Ovary (tissue), 10 donors: ENCODE measurements at regions of chr2 and their contacts with region 1.

Region 1: GRCh38 chr2:205685314-205686055 is 3.2 kb downstream of the NRP2 start:
- DNase-seq: peak in 4 of 5 donors; percentile 53 to 78 (median 60)
- H3K4me3 ChIP-seq: peak overlapping the region; percentile 74
- H3K27ac ChIP-seq: peak overlapping the region; percentile 56 to 75
- H3K4me1 ChIP-seq: peaks cover 22% of the 10 kb centered on the region
- H3K27me3 ChIP-seq: no peaks in the 10 kb centered on the region
- CTCF ChIP-seq: no peak
- EP300 ChIP-seq: no peak
- POLR2A ChIP-seq: no peak

Region 2: DNA sequence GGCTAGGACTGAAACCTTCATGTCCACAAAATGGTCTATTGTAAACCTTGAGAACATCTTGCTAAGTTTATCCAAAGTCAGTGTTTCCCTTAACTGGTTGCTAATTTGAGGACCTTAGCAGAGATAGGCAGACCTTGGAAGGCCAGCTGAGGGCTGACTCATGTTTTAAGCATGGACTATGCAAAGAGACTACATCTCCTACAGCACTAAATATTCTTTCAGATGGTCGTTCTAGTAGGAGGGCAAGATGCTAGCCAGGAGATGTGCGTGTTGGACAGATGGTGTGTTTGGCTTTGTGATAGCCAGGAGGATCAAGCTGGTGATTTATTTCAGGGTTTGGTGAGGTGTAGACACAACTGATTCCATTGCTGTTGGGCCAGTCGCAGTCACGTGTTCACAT is 72.6 kb after region 1 on chr2:
- intact Hi-C with region 1: loop called in 1 of 4 experiments (anchors 2 kb)
- DNase-seq: peak in 4 of 5 donors; percentile 44 to 72 (median 60)
- H3K4me3 ChIP-seq: no peak overlapping the region
- H3K27ac ChIP-seq: peak overlapping the region in 1 of 2 donors; percentile 77
- H3K4me1 ChIP-seq: peaks cover 39% of the 10 kb centered on the region
- H3K27me3 ChIP-seq: no peaks in the 10 kb centered on the region
- CTCF ChIP-seq: no peak
- EP300 ChIP-seq: no peak
- POLR2A ChIP-seq: no peak